H1 (cell line): ENCODE measurements at regions of chr11 and their contacts with region 1.

Region 1: GRCh38 chr11:123202155-123203151 is 7.4 kb upstream of the CLMP start:
- DNase-seq: peak in 1 of 2 experiments; percentile 39
- H3K4me3 ChIP-seq: no peak overlapping the region
- H3K27ac ChIP-seq: no peak overlapping the region
- H3K4me1 ChIP-seq: peaks cover 2 to 6% (median 5%) of the 10 kb centered on the region in 4 experiments; a peak in 6 of 7 replicates
- H3K27me3 ChIP-seq: no peaks in the 10 kb centered on the region; a peak in 2 of 7 replicates
- CTCF ChIP-seq: no peak
- EP300 ChIP-seq: no peak
- POLR2A ChIP-seq: no peak
- RAD21 ChIP-seq: no peak

Region 2: GRCh38 chr11:123219066-123219690 is 16.7 kb after region 1 on chr11:
- CTCF ChIA-PET with region 1: no interaction called
- POLR2A ChIA-PET with region 1: interaction called, 14 read pairs
- DNase-seq: no peak
- H3K4me3 ChIP-seq: no peak overlapping the region
- H3K27ac ChIP-seq: no peak overlapping the region
- H3K4me1 ChIP-seq: peaks cover 0 to 8% (median 6%) of the 10 kb centered on the region in 4 experiments; a peak in 4 of 7 replicates
- H3K27me3 ChIP-seq: peaks cover 0 to 1% (median 0%) of the 10 kb centered on the region in 4 experiments; a peak in 1 of 7 replicates
- CTCF ChIP-seq: no peak
- EP300 ChIP-seq: no peak
- POLR2A ChIP-seq: no peak
- RAD21 ChIP-seq: no peak